ENCODE measurements at regions of chr1 and their contacts with region 1.

Region 1: DNA sequence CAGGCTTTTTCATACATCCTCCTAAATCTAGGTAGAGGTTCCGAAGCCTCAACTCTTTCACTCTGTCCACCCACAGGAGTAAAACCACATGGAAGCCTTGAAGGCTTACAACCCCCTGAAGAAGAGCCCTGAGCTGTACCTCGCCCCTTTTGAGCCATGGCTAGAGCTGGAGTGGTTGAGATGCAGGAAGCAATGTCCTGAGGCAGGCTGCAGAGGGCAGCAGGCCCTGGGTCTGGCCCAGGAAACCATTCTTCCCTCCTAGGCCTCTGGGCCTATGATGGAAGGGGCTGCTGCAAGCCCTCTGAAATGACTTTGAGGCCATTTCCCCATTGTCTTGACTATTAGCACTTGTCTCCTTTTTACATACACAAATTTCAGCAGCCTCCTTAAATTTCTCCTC is 1503.0 kb downstream of the KCNT2 start:
- DNase-seq: no peak
- ATAC-seq: no peak
- H3K4me3 ChIP-seq: no peak overlapping the region
- H3K27ac ChIP-seq: no peak overlapping the region
- H3K4me1 ChIP-seq: no peaks in the 10 kb centered on the region
- H3K27me3 ChIP-seq: no peaks in the 10 kb centered on the region
- CTCF ChIP-seq: no peak

Region 2: GRCh38 chr1:193769651-193770050 is 1335.6 kb before region 1 on chr1:
- intact Hi-C with region 1: loop called in 1 of 10 experiments (anchors 10 kb)
- DNase-seq: no peak
- ATAC-seq: no peak
- H3K4me3 ChIP-seq: no peak overlapping the region
- H3K27ac ChIP-seq: no peak overlapping the region
- H3K4me1 ChIP-seq: peaks cover 0 to 7% (median 0%) of the 10 kb centered on the region in 9 donors
- H3K27me3 ChIP-seq: no peaks in the 10 kb centered on the region
- CTCF ChIP-seq: no peak

Measured in heart right ventricle (tissue), 16 donors.